ENCODE measurements at regions of chr10 and their contacts with region 1.

Region 1: GRCh38 chr10:119680050-119680449 is 28.9 kb downstream of the BAG3 start:
- DNase-seq: peak; percentile 97
- H3K4me3 ChIP-seq: peak overlapping the region in 1 of 3 experiments; percentile 16
- H3K27ac ChIP-seq: peak overlapping the region; percentile 92
- H3K4me1 ChIP-seq: peaks cover 65% of the 10 kb centered on the region
- H3K27me3 ChIP-seq: no peaks in the 10 kb centered on the region
- CTCF ChIP-seq: no peak

Region 2: GRCh38 chr10:119438717-119439116 is 241.3 kb before region 1 on chr10:
- CTCF ChIA-PET with region 1: interaction called, 19 read pairs
- dilution Hi-C with region 1: no loop called
- in situ Hi-C with region 1: no loop called
- intact Hi-C with region 1: no loop called
- DNase-seq: no peak
- H3K4me3 ChIP-seq: no peak overlapping the region
- H3K27ac ChIP-seq: no peak overlapping the region
- H3K4me1 ChIP-seq: peaks cover 9% of the 10 kb centered on the region
- H3K27me3 ChIP-seq: no peaks in the 10 kb centered on the region
- CTCF ChIP-seq: no peak

Region 3: DNA sequence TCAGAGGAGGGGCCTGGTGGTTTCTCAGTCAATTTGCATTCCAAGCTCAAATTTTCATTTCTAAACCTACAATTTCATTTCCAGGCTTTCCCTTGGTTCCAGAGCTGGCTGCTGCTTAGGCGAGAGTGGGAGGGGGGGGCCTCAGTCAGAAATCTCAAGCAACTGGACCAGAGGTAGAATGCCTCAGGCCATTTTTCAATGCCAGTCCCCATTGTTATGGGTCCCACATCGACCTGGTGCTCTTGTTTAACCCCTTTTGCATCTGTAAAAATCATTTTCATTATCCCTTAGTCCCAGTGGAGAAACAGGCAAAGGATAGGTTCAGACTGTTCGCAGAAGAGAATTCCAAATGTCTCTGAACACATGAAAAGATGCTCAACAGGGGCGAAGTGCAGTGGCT is 42.4 kb before region 1 on chr10:
- CTCF ChIA-PET with region 1: no interaction called
- dilution Hi-C with region 1: loop called (anchors 5 kb)
- in situ Hi-C with region 1: no loop called
- intact Hi-C with region 1: no loop called
- DNase-seq: no peak
- H3K4me3 ChIP-seq: no peak overlapping the region
- H3K27ac ChIP-seq: no peak overlapping the region
- H3K4me1 ChIP-seq: no peaks in the 10 kb centered on the region
- H3K27me3 ChIP-seq: no peaks in the 10 kb centered on the region
- CTCF ChIP-seq: no peak

Region 4: GRCh38 chr10:119658253-119658673 is 21.8 kb before region 1 on chr10:
- CTCF ChIA-PET with region 1: no interaction called
- dilution Hi-C with region 1: no loop called
- in situ Hi-C with region 1: no loop called
- intact Hi-C with region 1: loop called (anchors 1 kb)
- DNase-seq: peak; percentile 92
- H3K4me3 ChIP-seq: peak overlapping the region in 2 of 3 experiments; percentile 20 to 23
- H3K27ac ChIP-seq: peak overlapping the region; percentile 56
- H3K4me1 ChIP-seq: peaks cover 68% of the 10 kb centered on the region
- H3K27me3 ChIP-seq: no peaks in the 10 kb centered on the region
- CTCF ChIP-seq: no peak

Region 5: DNA sequence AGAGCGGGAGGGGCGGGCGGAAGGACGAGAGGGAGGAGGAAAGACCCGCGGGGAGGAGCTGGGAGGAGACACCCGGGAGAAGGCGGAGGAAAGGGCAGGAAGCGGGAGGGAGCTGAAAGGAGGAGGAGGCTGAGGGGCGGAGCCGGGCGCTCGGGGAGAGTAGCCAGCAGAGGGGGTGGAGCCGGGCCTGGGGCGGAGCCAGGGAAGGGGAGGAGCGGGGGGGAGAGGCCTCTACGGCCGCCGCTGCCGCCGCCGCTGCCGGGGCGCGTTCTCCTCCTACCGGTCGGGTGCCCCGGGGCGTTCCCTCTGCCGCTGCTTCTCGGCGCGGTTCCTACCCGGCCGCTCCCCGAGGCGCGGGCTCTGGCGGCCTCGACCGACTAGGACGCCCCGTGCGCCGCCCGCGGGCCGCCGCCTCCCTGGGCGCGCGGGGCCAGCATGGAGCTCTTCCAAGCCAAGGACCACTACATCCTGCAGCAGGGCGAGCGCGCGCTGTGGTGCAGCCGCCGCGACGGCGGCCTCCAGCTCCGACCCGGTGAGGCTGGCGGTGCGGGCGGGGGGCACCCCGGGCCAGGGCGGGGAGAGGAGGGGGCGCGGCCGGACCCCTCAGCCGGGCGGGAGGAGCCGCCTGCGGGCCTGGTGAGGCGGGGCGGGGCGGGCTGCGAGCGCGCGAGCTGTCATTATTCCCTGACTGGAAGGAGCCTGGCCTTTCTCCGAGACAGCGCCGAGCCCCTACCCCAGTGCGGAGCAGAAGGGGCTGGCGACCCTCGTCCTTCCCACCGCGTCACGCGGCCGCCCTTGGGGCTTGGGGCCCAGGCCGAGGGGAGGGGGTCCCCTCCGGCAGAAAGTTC is 46.0 kb after region 1 on chr10 and contains the start of gene INPP5F:
- CTCF ChIA-PET with region 1: interaction called, 12 read pairs
- dilution Hi-C with region 1: no loop called
- in situ Hi-C with region 1: loop called in 1 of 2 experiments (anchors 10 kb)
- intact Hi-C with region 1: no loop called
- DNase-seq: peak; percentile 98
- H3K4me3 ChIP-seq: peak within 1 kb of the TSS; percentile 76 to 95 (median 85)
- H3K27ac ChIP-seq: peak within 1 kb of the TSS; percentile 54
- H3K4me1 ChIP-seq: peaks cover 15% of the 10 kb centered on the region
- H3K27me3 ChIP-seq: no peaks in the 10 kb centered on the region
- CTCF ChIP-seq: peak in 1 of 2 donors; percentile 27
- total RNA-seq, gene INPP5F: 19.3 to 22.1 TPM

Measured in mammary epithelial cell (primary cell).